Activated naive CD4-positive, alpha-beta T cell treated with anti-CD3 and anti-CD28 coated beads for 36 hours (primary cell): ENCODE measurements at regions of chr10 and their contacts with region 1.

Region 1: GRCh38 chr10:29998142-29998808 is 61.1 kb downstream of the JCAD start:
- DNase-seq: peak; percentile 86
- H3K4me3 Mint-ChIP-seq: no peak overlapping the region
- H3K27ac Mint-ChIP-seq: no peak overlapping the region
- H3K4me1 Mint-ChIP-seq: peaks cover 6% of the 10 kb centered on the region
- H3K27me3 Mint-ChIP-seq: peaks cover 43% of the 10 kb centered on the region

Region 2: GRCh38 chr10:29969255-29970011 is 28.8 kb before region 1 on chr10:
- CTCF ChIA-PET with region 1: no interaction called
- intact Hi-C with region 1: no loop called
- DNase-seq: no peak
- H3K4me3 Mint-ChIP-seq: no peak overlapping the region
- H3K27ac Mint-ChIP-seq: no peak overlapping the region
- H3K4me1 Mint-ChIP-seq: no peaks in the 10 kb centered on the region
- H3K27me3 Mint-ChIP-seq: peaks cover 3% of the 10 kb centered on the region

Region 3: DNA sequence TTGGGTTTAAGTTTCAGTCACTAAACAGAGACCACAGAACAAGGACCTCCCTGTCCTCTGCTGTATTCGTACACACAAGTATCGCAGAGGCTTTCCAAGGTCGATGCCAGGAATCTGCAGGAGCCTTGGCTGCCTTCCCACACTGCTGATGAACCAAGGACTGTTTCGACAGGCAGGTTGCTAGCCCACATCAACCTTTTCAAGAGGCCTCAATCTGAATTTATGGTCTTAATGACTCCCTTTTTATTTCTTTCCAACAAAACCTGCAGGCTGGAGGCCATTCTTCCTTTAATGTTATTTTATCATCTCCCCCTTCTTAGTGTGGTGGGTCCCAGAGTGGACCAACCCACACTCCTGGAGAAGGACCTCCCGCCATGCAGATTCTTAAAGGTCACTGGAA is 15.5 kb after region 1 on chr10:
- CTCF ChIA-PET with region 1: interaction called, 10 read pairs
- intact Hi-C with region 1: no loop called
- DNase-seq: no peak
- H3K4me3 Mint-ChIP-seq: no peak overlapping the region
- H3K27ac Mint-ChIP-seq: no peak overlapping the region
- H3K4me1 Mint-ChIP-seq: peaks cover 8% of the 10 kb centered on the region
- H3K27me3 Mint-ChIP-seq: peaks cover 33% of the 10 kb centered on the region

Region 4: GRCh38 chr10:30241422-30242110 is 243.3 kb after region 1 on chr10:
- CTCF ChIA-PET with region 1: interaction called, 6 read pairs
- intact Hi-C with region 1: loop called (anchors 1 kb)
- DNase-seq: no peak
- H3K4me3 Mint-ChIP-seq: no peak overlapping the region
- H3K27ac Mint-ChIP-seq: no peak overlapping the region
- H3K4me1 Mint-ChIP-seq: no peaks in the 10 kb centered on the region
- H3K27me3 Mint-ChIP-seq: no peaks in the 10 kb centered on the region

Region 5: GRCh38 chr10:30384701-30385201 is 386.5 kb after region 1 on chr10:
- CTCF ChIA-PET with region 1: interaction called, 3 read pairs
- intact Hi-C with region 1: loop called (anchors 1 kb)
- DNase-seq: peak; percentile 38
- H3K4me3 Mint-ChIP-seq: no peak overlapping the region
- H3K27ac Mint-ChIP-seq: no peak overlapping the region
- H3K4me1 Mint-ChIP-seq: no peaks in the 10 kb centered on the region
- H3K27me3 Mint-ChIP-seq: peaks cover 2% of the 10 kb centered on the region